ENCODE measurements at regions of chr9 and their contacts with region 1.

Region 1: GRCh38 chr9:111839388-111839787 is 44.7 kb upstream of the SHOC1 start:
- DNase-seq: peak; percentile 43 to 77 (median 66)
- H3K4me3 ChIP-seq: peak overlapping the region in 1 of 4 donors; percentile 3
- H3K27ac ChIP-seq: peak overlapping the region; percentile 22 to 88 (median 59)
- H3K4me1 ChIP-seq: peaks cover 41 to 43% of the 10 kb centered on the region in 2 donors
- H3K27me3 ChIP-seq: no peaks in the 10 kb centered on the region
- CTCF ChIP-seq: no peak
- POLR2A ChIP-seq: peak in 1 of 2 donors; percentile 40

Region 2: GRCh38 chr9:111909441-111909840 is 70.1 kb after region 1 on chr9:
- intact Hi-C with region 1: loop called in 1 of 2 experiments (anchors 10 kb)
- DNase-seq: no peak
- H3K4me3 ChIP-seq: no peak overlapping the region
- H3K27ac ChIP-seq: peak overlapping the region in 3 of 5 donors; percentile 7 to 28 (median 11)
- H3K4me1 ChIP-seq: peaks cover 15 to 77% of the 10 kb centered on the region in 2 donors
- H3K27me3 ChIP-seq: no peaks in the 10 kb centered on the region
- CTCF ChIP-seq: no peak
- POLR2A ChIP-seq: no peak

Region 3: GRCh38 chr9:111992523-111992922 is 153.1 kb after region 1 on chr9:
- intact Hi-C with region 1: no loop called
- DNase-seq: no peak
- H3K4me3 ChIP-seq: no peak overlapping the region
- H3K27ac ChIP-seq: no peak overlapping the region
- H3K4me1 ChIP-seq: peaks cover 5% of the 10 kb centered on the region in 2 donors
- H3K27me3 ChIP-seq: no peaks in the 10 kb centered on the region
- CTCF ChIP-seq: no peak
- POLR2A ChIP-seq: no peak

Measured in adrenal gland (tissue), 19 donors.